ENCODE measurements at regions of chr15 and their contacts with region 1.

Region 1: GRCh38 chr15:74036271-74037170 is 42.0 kb downstream of the PML start:
- DNase-seq: peak; percentile 59
- H3K4me3 ChIP-seq: no peak overlapping the region
- H3K27ac ChIP-seq: no peak overlapping the region
- H3K4me1 ChIP-seq: peaks cover 9% of the 10 kb centered on the region
- H3K27me3 ChIP-seq: no peaks in the 10 kb centered on the region
- CTCF ChIP-seq: peak; percentile 53 to 76
- POLR2A ChIP-seq: no peak

Region 2: GRCh38 chr15:73982222-73982962 is 54.1 kb before region 1 on chr15:
- CTCF ChIA-PET with region 1: interaction called, 53 read pairs
- POLR2A ChIA-PET with region 1: no interaction called
- dilution Hi-C with region 1: no loop called
- intact Hi-C with region 1: no loop called
- DNase-seq: peak; percentile 53
- H3K4me3 ChIP-seq: no peak overlapping the region
- H3K27ac ChIP-seq: peak overlapping the region; percentile 70
- H3K4me1 ChIP-seq: peaks cover 27% of the 10 kb centered on the region
- H3K27me3 ChIP-seq: no peaks in the 10 kb centered on the region
- CTCF ChIP-seq: no peak
- POLR2A ChIP-seq: peak; percentile 20

Region 3: GRCh38 chr15:74011610-74012009 is 24.9 kb before region 1 on chr15:
- CTCF ChIA-PET with region 1: interaction called, 35 read pairs
- POLR2A ChIA-PET with region 1: no interaction called
- dilution Hi-C with region 1: no loop called
- intact Hi-C with region 1: no loop called
- DNase-seq: peak; percentile 92
- H3K4me3 ChIP-seq: peak overlapping the region in 1 of 3 experiments; percentile 56
- H3K27ac ChIP-seq: peak overlapping the region; percentile 47
- H3K4me1 ChIP-seq: peaks cover 51% of the 10 kb centered on the region
- H3K27me3 ChIP-seq: no peaks in the 10 kb centered on the region
- CTCF ChIP-seq: no peak
- POLR2A ChIP-seq: peak; percentile 40

Region 4: GRCh38 chr15:74025436-74025835 is 11.1 kb before region 1 on chr15:
- CTCF ChIA-PET with region 1: interaction called, 36 read pairs
- POLR2A ChIA-PET with region 1: interaction called, 3 read pairs
- dilution Hi-C with region 1: no loop called
- intact Hi-C with region 1: no loop called
- DNase-seq: peak; percentile 70
- H3K4me3 ChIP-seq: no peak overlapping the region
- H3K27ac ChIP-seq: peak overlapping the region; percentile 62
- H3K4me1 ChIP-seq: peaks cover 22% of the 10 kb centered on the region
- H3K27me3 ChIP-seq: no peaks in the 10 kb centered on the region
- CTCF ChIP-seq: no peak
- POLR2A ChIP-seq: no peak

Measured in endothelial cell of umbilical vein (primary cell).